Left cardiac atrium (tissue), 4 donors: ENCODE measurements at regions of chr6 and their contacts with region 1.

Region 1: DNA sequence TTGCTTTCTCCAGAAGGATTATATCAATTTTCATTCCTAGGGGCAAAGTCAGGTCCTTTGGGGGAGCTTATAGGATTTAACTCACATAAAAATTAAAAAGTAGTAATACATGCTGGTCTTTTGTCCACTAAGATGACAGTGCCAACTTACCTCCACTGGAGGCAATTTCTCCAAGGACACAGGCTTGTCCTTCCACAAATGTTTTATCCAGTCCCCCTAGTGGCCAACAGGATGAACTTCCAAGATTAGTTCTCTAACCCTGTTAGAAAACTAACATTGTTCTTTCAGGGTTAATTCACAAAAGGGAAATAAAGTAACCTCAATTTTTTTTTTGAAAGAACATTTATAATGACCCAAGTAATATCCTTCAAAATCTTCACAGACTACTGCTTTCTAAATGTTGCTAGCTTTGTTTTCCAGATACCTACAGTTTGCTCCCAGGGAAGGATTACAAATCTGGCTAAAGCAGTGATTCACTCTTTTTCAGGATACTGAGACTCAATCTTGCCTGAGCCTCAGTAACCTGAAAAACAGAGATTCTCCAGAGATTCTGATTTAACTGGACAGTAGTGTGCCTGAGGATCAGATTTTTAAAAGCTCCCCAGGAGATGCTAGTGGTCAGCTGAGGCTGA is 31.7 kb upstream of the UBR2 start:
- DNase-seq: no peak
- ATAC-seq: peak; percentile 51 to 63

Region 2: GRCh38 chr6:42260972-42261371 is 271.2 kb before region 1 on chr6:
- intact Hi-C with region 1: loop called in 1 of 2 experiments (anchors 10 kb)
- DNase-seq: peak; percentile 43
- ATAC-seq: peak; percentile 70 to 76